ENCODE measurements at regions of chr18 and their contacts with region 1.

Region 1: GRCh38 chr18:46297621-46298020 is 193.4 kb downstream of the HAUS1 start:
- DNase-seq: no peak
- H3K4me3 ChIP-seq: no peak overlapping the region
- H3K27ac ChIP-seq: no peak overlapping the region
- H3K4me1 ChIP-seq: no peaks in the 10 kb centered on the region
- H3K27me3 ChIP-seq: no peaks in the 10 kb centered on the region
- CTCF ChIP-seq: no peak
- POLR2A ChIP-seq: no peak

Region 2: GRCh38 chr18:45106331-45106774 is 1191.3 kb before region 1 on chr18:
- intact Hi-C with region 1: no loop called
- DNase-seq: no peak
- H3K4me3 ChIP-seq: no peak overlapping the region
- H3K27ac ChIP-seq: no peak overlapping the region
- H3K4me1 ChIP-seq: no peaks in the 10 kb centered on the region
- H3K27me3 ChIP-seq: no peaks in the 10 kb centered on the region
- CTCF ChIP-seq: no peak
- POLR2A ChIP-seq: no peak

Region 3: GRCh38 chr18:46315187-46315586 is 17.6 kb after region 1 on chr18:
- intact Hi-C with region 1: loop called (anchors 1 kb)
- DNase-seq: no peak
- H3K4me3 ChIP-seq: no peak overlapping the region
- H3K27ac ChIP-seq: no peak overlapping the region
- H3K4me1 ChIP-seq: no peaks in the 10 kb centered on the region
- H3K27me3 ChIP-seq: no peaks in the 10 kb centered on the region
- CTCF ChIP-seq: no peak
- POLR2A ChIP-seq: no peak

Region 4: DNA sequence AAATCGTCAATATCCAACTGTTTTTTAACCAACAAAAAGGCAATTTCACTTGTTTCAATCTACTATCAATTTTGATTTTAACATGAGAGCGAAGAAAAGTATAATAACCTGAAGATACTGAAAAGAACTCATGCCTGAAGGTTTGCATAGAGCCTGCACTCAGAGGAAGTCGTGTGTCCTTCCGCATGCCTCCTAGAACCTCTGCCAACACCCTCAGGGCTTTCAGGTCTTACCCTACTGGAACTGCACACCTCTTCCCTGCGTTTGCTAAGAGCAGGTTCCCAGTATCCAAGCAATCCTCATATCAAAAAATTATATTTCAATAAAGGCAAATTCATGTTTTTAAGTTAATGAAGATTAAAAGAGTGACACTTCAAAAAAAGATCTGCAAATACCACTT is 545.0 kb after region 1 on chr18:
- intact Hi-C with region 1: no loop called
- DNase-seq: peak; percentile 63 to 68
- H3K4me3 ChIP-seq: no peak overlapping the region
- H3K27ac ChIP-seq: no peak overlapping the region
- H3K4me1 ChIP-seq: no peaks in the 10 kb centered on the region
- H3K27me3 ChIP-seq: no peaks in the 10 kb centered on the region
- CTCF ChIP-seq: no peak
- POLR2A ChIP-seq: no peak

Measured in breast epithelium (tissue), 4 donors.